ENCODE measurements at regions of chr17 and their contacts with region 1.

Region 1: DNA sequence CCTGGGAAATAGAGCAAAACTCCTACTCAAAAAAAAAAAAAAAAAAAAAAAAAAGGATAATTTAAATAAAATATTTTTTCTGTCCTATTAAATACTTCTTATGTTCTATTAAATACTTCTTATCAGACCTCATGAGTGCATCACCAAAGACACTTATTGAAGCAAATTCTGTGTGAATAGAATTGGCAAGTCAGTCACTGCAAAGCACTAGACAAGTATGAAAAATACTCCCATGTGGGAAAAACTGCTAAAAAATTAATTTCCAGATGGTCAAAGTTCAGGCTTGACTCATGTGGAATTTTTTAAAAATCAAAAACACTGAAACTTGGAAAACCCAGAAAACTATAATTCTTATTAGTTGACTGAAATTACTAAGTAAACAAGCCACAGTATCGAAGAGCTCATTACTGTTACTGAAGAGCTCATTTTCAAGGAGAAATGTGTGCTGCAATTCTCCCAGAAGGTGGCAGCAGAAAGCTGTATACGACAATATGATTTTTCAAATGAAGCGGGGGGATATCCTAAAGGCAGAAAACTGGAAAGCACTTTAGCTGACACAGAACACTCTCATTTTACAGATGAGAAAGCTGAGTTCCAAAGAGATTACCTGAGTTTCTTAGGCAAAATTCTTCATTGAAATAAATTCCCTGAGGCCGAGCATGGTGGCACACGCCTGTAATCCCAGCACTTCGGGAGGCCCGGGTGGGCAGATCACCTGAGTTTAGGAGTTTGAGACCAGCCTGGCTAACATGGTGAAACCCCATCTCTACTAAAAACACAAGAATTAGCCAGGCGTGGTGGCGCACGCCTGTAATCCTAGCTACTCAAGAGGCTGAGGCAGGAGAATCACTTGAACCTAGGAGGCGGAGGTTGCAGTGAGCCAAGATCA is 15.9 kb upstream of the FBXO47 start:
- DNase-seq: peak; percentile 65
- H3K4me3 Mint-ChIP-seq: no peak overlapping the region
- H3K27ac Mint-ChIP-seq: no peak overlapping the region
- H3K4me1 Mint-ChIP-seq: peaks cover 7% of the 10 kb centered on the region
- H3K27me3 Mint-ChIP-seq: peaks cover 14% of the 10 kb centered on the region

Region 2: GRCh38 chr17:38777641-38778250 is 205.4 kb before region 1 on chr17:
- CTCF ChIA-PET with region 1: no interaction called
- DNase-seq: no peak
- H3K4me3 Mint-ChIP-seq: no peak overlapping the region
- H3K27ac Mint-ChIP-seq: no peak overlapping the region
- H3K4me1 Mint-ChIP-seq: no peaks in the 10 kb centered on the region
- H3K27me3 Mint-ChIP-seq: no peaks in the 10 kb centered on the region

Region 3: DNA sequence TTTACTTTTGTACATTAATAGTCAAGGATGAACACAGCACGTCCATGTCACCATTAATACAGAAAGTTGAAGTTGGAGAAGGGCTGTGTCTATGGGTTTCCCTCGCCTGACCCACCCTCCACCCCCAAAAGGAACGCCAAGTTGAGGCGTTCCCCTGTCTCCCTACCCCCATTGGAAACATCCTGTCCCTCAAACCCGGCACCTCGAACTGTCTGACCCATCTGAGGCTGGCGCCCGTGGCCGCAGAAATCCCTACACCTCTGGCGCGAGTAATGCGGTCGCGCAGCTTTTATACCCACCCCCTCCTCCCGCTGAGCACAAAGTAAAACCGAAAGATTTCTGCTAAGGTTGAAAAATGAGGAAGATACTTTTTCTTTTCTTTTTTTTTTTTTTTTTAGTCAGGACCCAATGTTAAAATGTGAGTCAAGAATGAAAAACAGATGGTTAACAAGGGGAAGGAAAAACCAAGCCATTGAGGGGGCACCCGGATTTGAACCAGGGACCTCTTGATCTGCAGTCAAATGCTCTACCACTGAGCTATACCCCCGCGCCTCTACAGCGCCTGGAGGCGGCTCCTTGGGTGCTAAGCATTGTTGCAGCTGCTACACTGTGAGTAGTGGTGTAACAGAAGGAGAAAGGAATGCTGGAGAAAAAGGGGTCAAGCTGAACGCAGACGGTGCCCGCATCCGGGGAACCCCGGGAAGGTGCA is 114.1 kb before region 1 on chr17:
- CTCF ChIA-PET with region 1: interaction called, 33 read pairs
- DNase-seq: peak; percentile 88
- H3K4me3 Mint-ChIP-seq: peak overlapping the region; percentile 98
- H3K27ac Mint-ChIP-seq: peak overlapping the region; percentile 99
- H3K4me1 Mint-ChIP-seq: peaks cover 51% of the 10 kb centered on the region
- H3K27me3 Mint-ChIP-seq: peaks cover 16% of the 10 kb centered on the region

Region 4: GRCh38 chr17:38943607-38944006 is 39.5 kb before region 1 on chr17:
- CTCF ChIA-PET with region 1: no interaction called
- DNase-seq: no peak
- H3K4me3 Mint-ChIP-seq: no peak overlapping the region
- H3K27ac Mint-ChIP-seq: no peak overlapping the region
- H3K4me1 Mint-ChIP-seq: peaks cover 8% of the 10 kb centered on the region
- H3K27me3 Mint-ChIP-seq: peaks cover 4% of the 10 kb centered on the region

Region 5: DNA sequence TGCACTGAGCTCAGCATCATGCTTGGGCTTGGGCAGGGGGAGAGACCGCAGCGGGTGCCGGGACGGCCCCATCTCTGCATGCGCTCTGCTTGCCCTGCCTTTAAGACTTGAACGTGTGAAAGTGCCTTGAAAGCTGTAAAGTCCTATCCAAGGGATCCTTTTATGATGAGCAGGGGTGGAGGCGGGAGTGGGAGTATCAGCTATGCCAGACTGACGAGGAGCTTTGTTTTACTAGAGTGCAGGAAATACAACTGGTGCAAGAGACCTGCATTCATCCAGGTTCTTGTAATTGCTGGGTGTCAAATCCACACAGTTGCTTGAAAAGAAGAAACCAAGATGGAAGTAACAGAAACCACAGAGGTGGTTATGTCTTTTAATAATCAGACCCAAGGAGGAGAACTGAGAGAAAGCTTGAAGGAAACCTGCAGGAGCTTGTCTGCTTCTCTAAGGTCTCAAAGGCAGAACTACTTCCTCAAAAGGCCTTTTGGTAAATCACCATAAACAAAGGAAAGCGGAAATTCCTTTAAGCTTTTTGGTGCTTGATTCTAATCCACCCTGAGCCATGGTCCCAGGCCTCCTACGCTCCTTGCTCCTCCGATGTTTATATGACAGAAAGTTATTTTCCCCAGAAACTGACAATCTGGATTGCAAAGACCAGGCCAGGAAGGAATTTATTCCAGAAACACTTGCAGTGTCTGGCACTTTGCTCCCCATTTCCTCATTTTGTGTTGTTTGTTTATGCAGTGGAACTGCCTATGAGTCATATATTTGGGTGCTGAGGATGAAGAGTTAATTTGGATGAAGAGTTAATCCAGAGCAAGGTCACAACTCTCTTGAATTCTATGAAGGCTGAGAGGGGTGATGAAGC is 35.4 kb after region 1 on chr17:
- CTCF ChIA-PET with region 1: interaction called, 18 read pairs
- DNase-seq: no peak
- H3K4me3 Mint-ChIP-seq: no peak overlapping the region
- H3K27ac Mint-ChIP-seq: peak overlapping the region; percentile 77
- H3K4me1 Mint-ChIP-seq: peaks cover 35% of the 10 kb centered on the region
- H3K27me3 Mint-ChIP-seq: no peaks in the 10 kb centered on the region

Region 6: GRCh38 chr17:39064374-39064773 is 81.3 kb after region 1 on chr17:
- CTCF ChIA-PET with region 1: interaction called, 11 read pairs
- DNase-seq: no peak
- H3K4me3 Mint-ChIP-seq: no peak overlapping the region
- H3K27ac Mint-ChIP-seq: no peak overlapping the region
- H3K4me1 Mint-ChIP-seq: peaks cover 16% of the 10 kb centered on the region
- H3K27me3 Mint-ChIP-seq: peaks cover 21% of the 10 kb centered on the region

Region 7: DNA sequence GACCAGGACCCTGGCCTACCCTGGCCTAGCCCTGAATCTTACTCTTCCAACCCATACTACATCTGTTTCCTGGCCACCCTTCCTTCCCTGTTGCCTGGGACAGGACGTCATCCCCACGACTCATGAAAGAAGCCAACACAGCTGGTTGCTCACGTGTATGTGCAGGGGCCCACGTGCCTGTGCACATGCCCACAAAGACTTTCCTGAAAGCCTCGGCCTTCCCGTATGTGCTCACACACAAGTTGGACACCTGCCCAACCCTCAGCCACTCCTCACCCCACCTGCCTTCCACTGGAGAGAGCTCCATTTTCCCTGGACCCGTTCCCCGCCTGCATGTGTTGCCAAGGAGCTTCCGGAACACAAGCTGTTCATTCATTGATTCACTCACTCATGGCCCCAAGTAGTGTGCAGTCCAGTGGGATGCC is 161.3 kb after region 1 on chr17:
- CTCF ChIA-PET with region 1: interaction called, 14 read pairs
- DNase-seq: no peak
- H3K4me3 Mint-ChIP-seq: no peak overlapping the region
- H3K27ac Mint-ChIP-seq: no peak overlapping the region
- H3K4me1 Mint-ChIP-seq: peaks cover 3% of the 10 kb centered on the region
- H3K27me3 Mint-ChIP-seq: peaks cover 17% of the 10 kb centered on the region

Region 8: DNA sequence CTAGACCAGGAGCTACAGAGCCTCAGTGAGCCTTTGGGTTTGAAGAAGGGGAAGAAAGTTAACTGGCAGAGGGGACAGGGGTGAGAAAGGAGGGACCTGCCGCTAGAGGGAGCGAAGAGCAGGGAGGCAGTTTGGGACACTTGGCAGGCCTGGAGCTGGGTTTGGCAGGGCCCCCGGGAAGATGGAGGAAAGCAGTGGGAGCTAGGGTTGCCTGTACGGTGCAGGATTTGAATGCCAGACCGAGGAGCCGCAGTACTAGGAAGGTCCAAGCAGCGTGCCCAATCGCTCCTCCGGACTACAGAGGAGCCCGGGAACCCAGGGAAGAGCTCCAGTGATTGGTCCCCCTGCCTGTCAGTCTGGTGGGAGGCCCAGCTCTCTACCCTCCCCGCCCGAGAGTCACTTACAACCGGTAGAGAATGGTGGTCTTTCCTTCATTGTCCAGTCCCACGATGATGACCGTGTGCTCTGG is 181.6 kb after region 1 on chr17:
- CTCF ChIA-PET with region 1: interaction called, 20 read pairs
- DNase-seq: peak; percentile 85
- H3K4me3 Mint-ChIP-seq: peak overlapping the region; percentile 79
- H3K27ac Mint-ChIP-seq: no peak overlapping the region
- H3K4me1 Mint-ChIP-seq: peaks cover 40% of the 10 kb centered on the region
- H3K27me3 Mint-ChIP-seq: peaks cover 83% of the 10 kb centered on the region

Region 9: DNA sequence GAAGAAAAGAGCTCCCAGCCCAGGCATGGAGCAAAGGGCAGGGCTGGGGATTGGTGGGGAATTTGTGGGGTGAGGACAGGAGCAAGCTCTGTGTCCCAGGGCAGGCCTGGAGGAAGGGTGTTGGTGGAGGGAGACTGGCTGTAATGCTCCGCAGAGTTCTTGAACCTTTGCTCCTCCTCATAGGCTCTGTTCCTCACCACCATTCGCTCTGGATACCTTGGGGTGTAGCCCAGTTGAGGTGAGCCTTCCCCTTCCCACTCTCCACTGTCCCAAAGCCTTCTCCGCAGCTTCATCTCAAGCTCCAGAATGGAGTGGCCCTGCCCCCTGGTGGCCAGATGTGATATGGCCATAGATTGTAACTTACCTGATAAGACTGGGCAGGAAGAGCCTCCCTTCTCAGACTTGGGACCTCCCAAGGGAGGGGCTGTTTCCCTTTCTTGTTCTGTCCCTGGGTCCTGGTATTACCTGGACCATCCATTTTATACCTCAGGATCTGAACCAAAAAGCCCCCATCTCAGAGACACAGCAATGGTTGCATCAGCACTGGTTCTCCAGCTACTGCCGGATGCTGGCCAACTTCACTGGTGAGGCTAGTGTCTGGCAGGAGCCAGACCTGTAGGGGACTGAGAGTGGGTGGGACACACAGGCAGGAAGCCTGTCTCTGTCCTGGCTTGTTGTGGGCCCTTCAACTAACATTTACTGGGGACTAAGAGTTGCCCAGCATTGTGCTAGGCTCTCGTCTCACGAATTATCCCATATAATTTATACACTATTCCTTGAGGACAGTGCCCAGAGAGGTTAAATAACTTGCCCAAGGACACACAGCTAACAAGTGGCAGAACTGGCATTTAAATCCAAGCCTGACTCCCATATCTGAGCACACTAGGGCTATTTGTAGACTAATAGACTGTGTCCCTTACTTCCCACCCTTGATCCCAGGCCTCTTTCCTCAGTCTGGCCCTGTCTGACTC is 261.8 kb after region 1 on chr17:
- CTCF ChIA-PET with region 1: interaction called, 16 read pairs
- DNase-seq: peak; percentile 92
- H3K4me3 Mint-ChIP-seq: no peak overlapping the region
- H3K27ac Mint-ChIP-seq: peak overlapping the region; percentile 46
- H3K4me1 Mint-ChIP-seq: peaks cover 14% of the 10 kb centered on the region
- H3K27me3 Mint-ChIP-seq: peaks cover 17% of the 10 kb centered on the region